ENCODE measurements at regions of chr12 and their contacts with region 1.

Region 1: DNA sequence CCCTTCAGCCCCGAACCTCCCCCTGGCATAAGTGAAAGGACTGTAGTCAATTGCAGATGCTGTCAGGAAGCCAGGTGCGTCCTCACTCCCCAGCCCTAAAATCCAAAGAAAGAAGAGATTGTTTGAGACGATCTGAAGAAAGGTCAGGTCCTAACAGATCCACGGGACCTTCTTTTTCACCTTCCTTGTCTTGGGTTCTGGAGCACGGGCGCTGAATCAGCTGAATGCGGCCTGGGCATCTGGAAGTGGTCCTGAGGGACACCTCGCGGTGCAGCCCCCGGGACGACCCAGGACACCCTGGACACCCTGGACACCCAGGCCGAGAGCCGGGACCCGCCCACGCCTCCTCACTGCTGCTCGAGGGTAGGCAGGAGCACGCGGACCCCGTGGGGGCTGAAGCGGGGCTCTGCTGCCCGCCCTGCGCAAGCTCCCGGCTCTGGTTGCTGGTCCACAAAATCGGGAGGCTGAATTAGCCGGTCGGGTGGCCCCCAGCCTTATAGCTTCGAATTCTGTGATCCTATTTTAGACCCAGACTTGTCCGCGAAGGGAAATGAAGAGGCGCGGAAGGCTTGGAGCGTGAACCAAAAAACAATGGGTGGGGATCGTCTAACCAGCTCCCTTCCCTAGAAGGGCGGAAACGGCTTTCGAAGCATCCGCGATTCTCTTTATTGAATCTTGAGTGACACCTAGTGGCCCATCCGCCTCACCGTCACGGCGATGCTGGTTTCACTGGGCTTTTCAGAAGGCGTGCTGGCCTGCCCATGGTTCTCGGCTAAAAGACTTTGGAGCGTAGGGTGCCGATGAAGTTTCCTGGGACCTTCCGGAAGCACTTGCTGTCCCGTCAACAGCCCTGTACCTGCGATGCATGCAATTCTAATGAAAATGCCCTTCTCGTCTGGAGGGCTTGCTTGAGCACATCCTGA is 46.4 kb upstream of the PLXNC1 start:
- DNase-seq: peak; percentile 87
- ATAC-seq: peak; percentile 85
- H3K4me3 ChIP-seq: peak overlapping the region; percentile 43 to 55
- H3K27ac ChIP-seq: no peak overlapping the region
- H3K4me1 ChIP-seq: peaks cover 6 to 18% of the 10 kb centered on the region in 2 experiments
- H3K27me3 ChIP-seq: no peaks in the 10 kb centered on the region
- CTCF ChIP-seq: peak; percentile 63 to 75 (median 74)
- POLR2A ChIP-seq: no peak
- RAD21 ChIP-seq: peak; percentile 92

Region 2: DNA sequence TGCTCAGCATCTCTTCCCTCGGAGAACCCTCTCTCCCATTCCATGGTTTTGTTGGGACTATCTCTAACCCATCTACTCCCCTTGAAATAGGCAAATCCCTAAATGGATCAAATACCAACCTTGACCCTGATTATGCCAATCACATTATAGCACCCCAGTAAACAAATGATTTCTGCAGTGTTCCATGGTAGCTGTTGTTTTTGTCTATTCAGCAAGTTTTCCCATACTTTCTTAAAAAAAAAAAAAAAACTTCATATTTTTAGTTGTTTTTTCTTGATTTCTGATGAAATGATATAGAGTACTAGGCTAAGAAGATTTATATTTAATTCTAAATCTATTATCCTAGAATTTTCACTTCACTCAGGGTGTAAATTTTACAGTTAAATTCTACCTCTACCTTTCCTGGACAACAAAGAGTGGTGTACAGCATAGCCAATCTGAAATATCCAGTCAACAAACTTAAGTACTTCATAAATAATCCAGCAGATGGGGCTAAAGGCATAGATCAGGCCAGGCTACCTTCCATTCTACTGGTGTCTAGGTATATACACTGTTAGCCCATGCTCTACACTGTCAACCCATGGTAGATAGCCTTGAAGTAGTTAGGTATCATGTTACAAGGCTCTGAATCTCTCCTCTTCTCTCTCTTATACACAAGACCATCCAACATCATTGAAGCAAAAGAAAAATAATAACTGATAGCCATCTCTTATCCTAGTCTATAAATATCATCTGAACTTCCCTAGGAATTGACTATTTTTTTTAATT is 1317.0 kb before region 1 on chr12:
- CTCF ChIA-PET with region 1: no interaction called
- POLR2A ChIA-PET with region 1: no interaction called
- RAD21 ChIA-PET with region 1: no interaction called
- intact Hi-C with region 1: loop called (anchors 5 kb)
- DNase-seq: peak; percentile 72
- ATAC-seq: peak; percentile 100
- H3K4me3 ChIP-seq: no peak overlapping the region
- H3K27ac ChIP-seq: no peak overlapping the region
- H3K4me1 ChIP-seq: no peaks in the 10 kb centered on the region
- H3K27me3 ChIP-seq: no peaks in the 10 kb centered on the region
- CTCF ChIP-seq: peak; percentile 49 to 76 (median 62); a peak in 5 of 6 replicates
- POLR2A ChIP-seq: no peak
- RAD21 ChIP-seq: peak; percentile 92

Region 3: DNA sequence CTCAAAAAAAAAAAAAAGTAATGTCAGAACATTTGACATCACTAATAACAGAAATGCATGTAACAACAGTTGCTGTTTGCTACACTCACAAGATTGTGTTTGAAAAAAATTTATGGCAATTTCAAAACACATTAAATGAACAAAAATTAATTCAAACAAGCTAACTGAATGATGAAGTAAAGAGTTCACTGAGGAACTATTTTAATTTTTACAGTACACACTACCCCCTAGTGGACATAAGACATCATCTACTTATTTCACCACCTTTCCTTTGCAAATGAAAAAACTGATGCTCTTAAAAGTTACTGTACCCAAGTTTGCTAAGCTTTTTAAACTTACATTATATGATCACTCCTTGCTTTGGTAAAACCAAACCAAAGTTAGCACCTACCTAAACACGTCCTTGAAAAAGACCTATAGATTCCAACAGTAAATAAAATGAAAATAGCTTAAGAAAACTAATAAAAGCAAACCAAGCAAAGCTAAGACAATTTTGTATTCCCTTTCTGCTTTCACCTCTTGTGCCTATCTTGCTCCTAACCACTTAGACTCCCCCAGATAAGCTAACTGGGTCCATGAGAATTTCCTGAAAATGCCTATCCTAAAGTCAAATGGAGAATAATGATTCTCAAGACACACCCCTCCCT is 682.5 kb before region 1 on chr12:
- CTCF ChIA-PET with region 1: interaction called, 35 read pairs
- POLR2A ChIA-PET with region 1: no interaction called
- RAD21 ChIA-PET with region 1: interaction called in 1 of 2 experiments, 4 read pairs
- intact Hi-C with region 1: loop called (anchors 1 kb)
- DNase-seq: no peak
- ATAC-seq: peak; percentile 57
- H3K4me3 ChIP-seq: no peak overlapping the region
- H3K27ac ChIP-seq: no peak overlapping the region
- H3K4me1 ChIP-seq: no peaks in the 10 kb centered on the region
- H3K27me3 ChIP-seq: no peaks in the 10 kb centered on the region
- CTCF ChIP-seq: peak; percentile 32 to 73 (median 48); a peak in 5 of 6 replicates
- POLR2A ChIP-seq: no peak
- RAD21 ChIP-seq: peak; percentile 46

Region 4: GRCh38 chr12:93514853-93515252 is 587.1 kb before region 1 on chr12:
- CTCF ChIA-PET with region 1: interaction called, 17 read pairs
- POLR2A ChIA-PET with region 1: interaction called, 3 read pairs
- RAD21 ChIA-PET with region 1: no interaction called
- intact Hi-C with region 1: no loop called
- DNase-seq: no peak
- ATAC-seq: no peak
- H3K4me3 ChIP-seq: no peak overlapping the region
- H3K27ac ChIP-seq: no peak overlapping the region
- H3K4me1 ChIP-seq: peaks cover 0 to 11% of the 10 kb centered on the region in 2 experiments; a peak in 2 of 4 replicates
- H3K27me3 ChIP-seq: no peaks in the 10 kb centered on the region
- CTCF ChIP-seq: no peak
- POLR2A ChIP-seq: no peak
- RAD21 ChIP-seq: no peak

Region 5: GRCh38 chr12:93766796-93767523 is 335.0 kb before region 1 on chr12:
- CTCF ChIA-PET with region 1: interaction called, 40 read pairs
- POLR2A ChIA-PET with region 1: no interaction called
- RAD21 ChIA-PET with region 1: interaction called, 4 to 8 read pairs
- intact Hi-C with region 1: loop called (anchors 1 kb)
- DNase-seq: no peak
- ATAC-seq: peak; percentile 71
- H3K4me3 ChIP-seq: no peak overlapping the region
- H3K27ac ChIP-seq: no peak overlapping the region
- H3K4me1 ChIP-seq: peaks cover 0 to 8% of the 10 kb centered on the region in 2 experiments; a peak in 1 of 4 replicates
- H3K27me3 ChIP-seq: no peaks in the 10 kb centered on the region
- CTCF ChIP-seq: peak; percentile 42 to 63 (median 53); a peak in 5 of 6 replicates
- POLR2A ChIP-seq: no peak
- RAD21 ChIP-seq: peak; percentile 78

Region 6: GRCh38 chr12:94074980-94075928 is 26.7 kb before region 1 on chr12:
- CTCF ChIA-PET with region 1: interaction called, 22 read pairs
- POLR2A ChIA-PET with region 1: no interaction called
- RAD21 ChIA-PET with region 1: interaction called in 1 of 2 experiments, 5 read pairs
- intact Hi-C with region 1: no loop called
- DNase-seq: peak; percentile 34
- ATAC-seq: peak; percentile 91
- H3K4me3 ChIP-seq: no peak overlapping the region
- H3K27ac ChIP-seq: no peak overlapping the region
- H3K4me1 ChIP-seq: 0 out of 4 replicates have a peak, but pooled peaks cover 0 to 3% of the 10 kb centered on the region in 2 experiments
- H3K27me3 ChIP-seq: no peaks in the 10 kb centered on the region
- CTCF ChIP-seq: peak; percentile 44 to 73 (median 65); a peak in 5 of 6 replicates
- POLR2A ChIP-seq: no peak
- RAD21 ChIP-seq: peak; percentile 64

Region 7: DNA sequence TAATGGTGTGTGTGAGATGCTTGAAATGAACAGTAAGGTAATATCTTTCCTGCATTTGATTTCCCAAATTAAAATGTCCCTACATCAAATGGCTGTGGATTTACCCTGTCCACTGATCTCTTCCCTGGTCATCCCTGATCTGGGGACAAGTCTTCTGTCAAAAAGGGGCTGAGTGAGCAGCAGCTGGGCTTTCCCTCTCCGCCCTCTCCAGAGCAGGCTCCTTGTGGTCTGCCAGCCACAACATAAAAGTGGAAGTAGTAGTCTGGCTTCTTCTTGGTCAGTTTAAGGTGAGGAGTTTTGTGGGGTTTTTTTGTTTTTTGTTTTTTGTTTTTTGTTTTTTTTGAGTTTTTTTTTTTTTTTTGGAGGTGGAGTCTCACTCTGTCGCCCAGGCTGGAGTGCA is 21.1 kb after region 1 on chr12:
- CTCF ChIA-PET with region 1: no interaction called
- POLR2A ChIA-PET with region 1: no interaction called
- RAD21 ChIA-PET with region 1: no interaction called
- intact Hi-C with region 1: no loop called
- DNase-seq: no peak
- ATAC-seq: no peak
- H3K4me3 ChIP-seq: no peak overlapping the region
- H3K27ac ChIP-seq: no peak overlapping the region
- H3K4me1 ChIP-seq: no peaks in the 10 kb centered on the region
- H3K27me3 ChIP-seq: peaks cover 17% of the 10 kb centered on the region; the same call in 1 of the 2 replicates
- CTCF ChIP-seq: no peak
- POLR2A ChIP-seq: no peak
- RAD21 ChIP-seq: no peak

Region 8: GRCh38 chr12:94309373-94309772 is 207.4 kb after region 1 on chr12:
- CTCF ChIA-PET with region 1: no interaction called
- POLR2A ChIA-PET with region 1: no interaction called
- RAD21 ChIA-PET with region 1: no interaction called
- intact Hi-C with region 1: no loop called
- DNase-seq: no peak
- ATAC-seq: no peak
- H3K4me3 ChIP-seq: no peak overlapping the region
- H3K27ac ChIP-seq: no peak overlapping the region
- H3K4me1 ChIP-seq: peaks cover 7 to 12% of the 10 kb centered on the region in 2 experiments; a peak in 3 of 4 replicates
- H3K27me3 ChIP-seq: no peaks in the 10 kb centered on the region
- CTCF ChIP-seq: no peak
- POLR2A ChIP-seq: no peak
- RAD21 ChIP-seq: no peak

Region 9: DNA sequence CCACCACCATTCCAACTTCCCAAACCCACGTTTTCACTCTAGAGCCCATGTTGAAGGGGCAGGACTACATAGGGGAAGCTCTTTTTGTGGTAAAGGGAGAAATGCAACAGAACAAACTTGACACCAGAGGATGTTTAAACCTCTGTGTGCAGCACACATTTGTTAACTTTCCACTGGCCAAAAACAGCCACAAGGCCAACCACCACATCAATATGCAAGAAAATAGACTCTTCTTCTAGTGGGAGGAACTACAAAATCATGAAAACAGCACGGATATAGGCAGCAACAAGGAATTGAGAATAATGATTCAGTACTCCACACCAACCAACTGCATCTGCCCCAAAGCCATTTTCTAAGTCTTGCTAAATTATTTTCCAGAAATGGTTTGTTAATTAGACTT is 424.0 kb after region 1 on chr12:
- CTCF ChIA-PET with region 1: no interaction called
- POLR2A ChIA-PET with region 1: no interaction called
- RAD21 ChIA-PET with region 1: no interaction called
- intact Hi-C with region 1: no loop called
- DNase-seq: no peak
- ATAC-seq: no peak
- H3K4me3 ChIP-seq: no peak overlapping the region
- H3K27ac ChIP-seq: no peak overlapping the region
- H3K4me1 ChIP-seq: no peaks in the 10 kb centered on the region
- H3K27me3 ChIP-seq: no peaks in the 10 kb centered on the region
- CTCF ChIP-seq: no peak
- POLR2A ChIP-seq: no peak
- RAD21 ChIP-seq: no peak

Measured in HCT116 (cell line).